B cell (primary cell): ENCODE measurements at regions of chr3 and their contacts with region 1.

Region 1: GRCh38 chr3:36868614-36869436 is 76.0 kb downstream of the TRANK1 start:
- DNase-seq: peak; percentile 77
- ATAC-seq: peak; percentile 73
- H3K4me3 ChIP-seq: no peak overlapping the region
- H3K4me3 Mint-ChIP-seq: no peak overlapping the region
- H3K27ac ChIP-seq: no peak overlapping the region
- H3K27ac Mint-ChIP-seq: peak overlapping the region; percentile 0
- H3K4me1 ChIP-seq: peaks cover 5 to 13% of the 10 kb centered on the region in 2 donors
- H3K4me1 Mint-ChIP-seq: peaks cover 22% of the 10 kb centered on the region
- H3K27me3 ChIP-seq: no peaks in the 10 kb centered on the region
- H3K27me3 Mint-ChIP-seq: no peaks in the 10 kb centered on the region
- CTCF ChIP-seq: peak; percentile 90

Region 2: GRCh38 chr3:35965908-35966307 is 902.9 kb before region 1 on chr3:
- CTCF ChIA-PET with region 1: no interaction called
- POLR2A ChIA-PET with region 1: no interaction called
- intact Hi-C with region 1: loop called (anchors 10 kb)
- DNase-seq: peak; percentile 26
- ATAC-seq: no peak
- H3K4me3 ChIP-seq: no peak overlapping the region
- H3K4me3 Mint-ChIP-seq: no peak overlapping the region
- H3K27ac ChIP-seq: no peak overlapping the region
- H3K27ac Mint-ChIP-seq: no peak overlapping the region
- H3K4me1 ChIP-seq: peaks cover 0 to 9% of the 10 kb centered on the region in 2 donors
- H3K4me1 Mint-ChIP-seq: peaks cover 5% of the 10 kb centered on the region
- H3K27me3 ChIP-seq: no peaks in the 10 kb centered on the region
- H3K27me3 Mint-ChIP-seq: peaks cover 3% of the 10 kb centered on the region
- CTCF ChIP-seq: peak; percentile 31

Region 3: GRCh38 chr3:36219398-36219797 is 649.4 kb before region 1 on chr3:
- CTCF ChIA-PET with region 1: no interaction called
- POLR2A ChIA-PET with region 1: no interaction called
- intact Hi-C with region 1: no loop called
- DNase-seq: no peak
- ATAC-seq: no peak
- H3K4me3 ChIP-seq: no peak overlapping the region
- H3K4me3 Mint-ChIP-seq: no peak overlapping the region
- H3K27ac ChIP-seq: no peak overlapping the region
- H3K27ac Mint-ChIP-seq: no peak overlapping the region
- H3K4me1 ChIP-seq: no peaks in the 10 kb centered on the region
- H3K4me1 Mint-ChIP-seq: no peaks in the 10 kb centered on the region
- H3K27me3 ChIP-seq: no peaks in the 10 kb centered on the region
- H3K27me3 Mint-ChIP-seq: no peaks in the 10 kb centered on the region
- CTCF ChIP-seq: no peak

Region 4: GRCh38 chr3:36904641-36905040 is 35.8 kb after region 1 on chr3:
- CTCF ChIA-PET with region 1: interaction called, 27 read pairs
- POLR2A ChIA-PET with region 1: no interaction called
- intact Hi-C with region 1: no loop called
- DNase-seq: no peak
- ATAC-seq: no peak
- H3K4me3 ChIP-seq: no peak overlapping the region
- H3K4me3 Mint-ChIP-seq: peak overlapping the region; percentile 84
- H3K27ac ChIP-seq: peak overlapping the region in 1 of 2 donors; percentile 58
- H3K27ac Mint-ChIP-seq: peak overlapping the region; percentile 79
- H3K4me1 ChIP-seq: peaks cover 69 to 87% of the 10 kb centered on the region in 2 donors
- H3K4me1 Mint-ChIP-seq: peaks cover 82% of the 10 kb centered on the region
- H3K27me3 ChIP-seq: no peaks in the 10 kb centered on the region
- H3K27me3 Mint-ChIP-seq: no peaks in the 10 kb centered on the region
- CTCF ChIP-seq: no peak

Region 5: GRCh38 chr3:36923523-36923943 is 54.7 kb after region 1 on chr3:
- CTCF ChIA-PET with region 1: interaction called, 16 read pairs
- POLR2A ChIA-PET with region 1: no interaction called
- intact Hi-C with region 1: no loop called
- DNase-seq: peak; percentile 55
- ATAC-seq: no peak
- H3K4me3 ChIP-seq: peak overlapping the region in 3 of 5 experiments; percentile 1 to 24 (median 12)
- H3K4me3 Mint-ChIP-seq: peak overlapping the region; percentile 80
- H3K27ac ChIP-seq: peak overlapping the region; percentile 2 to 60
- H3K27ac Mint-ChIP-seq: peak overlapping the region; percentile 83
- H3K4me1 ChIP-seq: peaks cover 39 to 50% of the 10 kb centered on the region in 2 donors
- H3K4me1 Mint-ChIP-seq: peaks cover 49% of the 10 kb centered on the region
- H3K27me3 ChIP-seq: no peaks in the 10 kb centered on the region
- H3K27me3 Mint-ChIP-seq: no peaks in the 10 kb centered on the region
- CTCF ChIP-seq: no peak

Region 6: GRCh38 chr3:36969540-36970432 is 101.0 kb after region 1 on chr3:
- CTCF ChIA-PET with region 1: interaction called, 11 read pairs
- POLR2A ChIA-PET with region 1: interaction called, 3 read pairs
- intact Hi-C with region 1: no loop called
- DNase-seq: peak; percentile 83
- ATAC-seq: peak; percentile 98
- H3K4me3 ChIP-seq: no peak overlapping the region
- H3K4me3 Mint-ChIP-seq: peak overlapping the region; percentile 36
- H3K27ac ChIP-seq: peak overlapping the region; percentile 74 to 84
- H3K27ac Mint-ChIP-seq: peak overlapping the region; percentile 91
- H3K4me1 ChIP-seq: peaks cover 21 to 25% of the 10 kb centered on the region in 2 donors
- H3K4me1 Mint-ChIP-seq: peaks cover 26% of the 10 kb centered on the region
- H3K27me3 ChIP-seq: no peaks in the 10 kb centered on the region
- H3K27me3 Mint-ChIP-seq: no peaks in the 10 kb centered on the region
- CTCF ChIP-seq: no peak